ENCODE measurements at regions of chr20 and their contacts with region 1.

Region 1: GRCh38 chr20:47886460-47887041 is 101.3 kb upstream of the SULF2 start:
- DNase-seq: no peak
- H3K4me3 ChIP-seq: no peak overlapping the region
- H3K27ac ChIP-seq: no peak overlapping the region
- H3K4me1 ChIP-seq: no peaks in the 10 kb centered on the region
- H3K27me3 ChIP-seq: no peaks in the 10 kb centered on the region
- CTCF ChIP-seq: no peak
- POLR2A ChIP-seq: no peak

Region 2: GRCh38 chr20:48523212-48523941 is 636.8 kb after region 1 on chr20:
- intact Hi-C with region 1: loop called in 1 of 2 experiments (anchors 10 kb)
- DNase-seq: peak in 6 of 7 donors; percentile 37 to 56 (median 49)
- H3K4me3 ChIP-seq: no peak overlapping the region
- H3K27ac ChIP-seq: no peak overlapping the region
- H3K4me1 ChIP-seq: no peaks in the 10 kb centered on the region
- H3K27me3 ChIP-seq: no peaks in the 10 kb centered on the region
- CTCF ChIP-seq: no peak
- POLR2A ChIP-seq: no peak

Measured in adrenal gland (tissue), 19 donors.